ENCODE measurements at regions of chr6 and their contacts with region 1.

Region 1: GRCh38 chr6:123393328-123393727 is 243.4 kb downstream of the TRDN start:
- DNase-seq: peak; percentile 78
- H3K4me3 ChIP-seq: no peak overlapping the region
- H3K27ac ChIP-seq: peak overlapping the region; percentile 33
- H3K4me1 ChIP-seq: peaks cover 11% of the 10 kb centered on the region
- H3K27me3 ChIP-seq: no peaks in the 10 kb centered on the region
- CTCF ChIP-seq: peak; percentile 70

Region 2: DNA sequence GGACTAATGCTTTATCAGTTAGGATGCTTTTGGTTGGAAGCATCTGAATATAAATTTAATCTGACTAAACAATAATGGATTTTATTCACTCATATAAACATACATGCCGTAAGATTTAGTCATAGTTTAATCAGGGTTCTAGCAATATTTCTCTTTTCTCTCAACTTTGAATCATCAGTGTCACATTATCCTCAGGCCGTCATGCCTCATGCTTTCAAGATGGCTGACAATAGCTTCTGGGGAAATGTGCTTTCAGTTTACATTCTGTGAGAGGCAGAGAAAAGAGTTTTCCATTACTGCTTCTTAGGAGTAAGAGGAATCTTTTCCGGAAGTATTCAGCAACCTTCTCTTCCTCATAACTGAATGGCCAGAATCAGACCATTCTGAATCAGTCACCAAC is 1795.7 kb before region 1 on chr6:
- CTCF ChIA-PET with region 1: no interaction called
- POLR2A ChIA-PET with region 1: no interaction called
- intact Hi-C with region 1: no loop called
- DNase-seq: no peak
- H3K4me3 ChIP-seq: no peak overlapping the region
- H3K27ac ChIP-seq: no peak overlapping the region
- H3K4me1 ChIP-seq: no peaks in the 10 kb centered on the region
- H3K27me3 ChIP-seq: no peaks in the 10 kb centered on the region
- CTCF ChIP-seq: no peak

Region 3: GRCh38 chr6:123007885-123008284 is 385.4 kb before region 1 on chr6:
- CTCF ChIA-PET with region 1: no interaction called
- POLR2A ChIA-PET with region 1: no interaction called
- intact Hi-C with region 1: no loop called
- DNase-seq: peak; percentile 51
- H3K4me3 ChIP-seq: no peak overlapping the region
- H3K27ac ChIP-seq: no peak overlapping the region
- H3K4me1 ChIP-seq: peaks cover 44% of the 10 kb centered on the region
- H3K27me3 ChIP-seq: no peaks in the 10 kb centered on the region
- CTCF ChIP-seq: no peak

Region 4: GRCh38 chr6:123888771-123889513 is 495.6 kb after region 1 on chr6:
- CTCF ChIA-PET with region 1: no interaction called
- POLR2A ChIA-PET with region 1: no interaction called
- intact Hi-C with region 1: no loop called
- DNase-seq: no peak
- H3K4me3 ChIP-seq: no peak overlapping the region
- H3K27ac ChIP-seq: no peak overlapping the region
- H3K4me1 ChIP-seq: no peaks in the 10 kb centered on the region
- H3K27me3 ChIP-seq: no peaks in the 10 kb centered on the region
- CTCF ChIP-seq: no peak

Region 5: DNA sequence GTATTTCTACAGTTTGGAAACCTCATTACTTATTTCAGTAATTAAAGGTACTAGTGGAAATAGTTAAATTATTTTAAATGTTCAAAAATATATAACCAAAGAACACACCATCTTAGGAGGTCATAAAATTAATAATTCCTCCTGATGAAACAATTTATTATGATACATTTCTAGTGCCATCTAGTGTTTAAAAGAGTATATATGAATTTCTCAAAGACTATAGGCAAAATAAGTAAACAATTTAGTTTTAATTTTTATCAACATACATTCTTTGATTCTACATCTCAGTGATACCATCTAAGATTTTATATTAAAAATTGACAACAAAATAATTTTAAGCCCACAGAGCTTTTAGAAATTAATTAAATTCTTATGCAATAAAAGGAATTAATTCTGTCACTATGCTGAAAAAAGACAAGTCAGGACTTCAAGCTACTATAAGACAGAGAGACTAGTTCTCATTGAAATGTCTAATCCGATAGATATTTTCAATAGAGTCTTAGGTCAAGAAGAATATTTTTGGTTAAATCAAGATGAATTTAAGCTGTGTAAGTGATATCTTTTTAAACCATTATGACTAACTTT is 1461.1 kb after region 1 on chr6:
- CTCF ChIA-PET with region 1: no interaction called
- POLR2A ChIA-PET with region 1: no interaction called
- intact Hi-C with region 1: loop called (anchors 10 kb)
- DNase-seq: peak; percentile 38
- H3K4me3 ChIP-seq: no peak overlapping the region
- H3K27ac ChIP-seq: no peak overlapping the region
- H3K4me1 ChIP-seq: peaks cover 14% of the 10 kb centered on the region
- H3K27me3 ChIP-seq: no peaks in the 10 kb centered on the region
- CTCF ChIP-seq: peak; percentile 62; the same call in 1 of the 2 replicates

Measured in A673 (cell line).